Mammary epithelial cell (primary cell): ENCODE measurements at regions of chr16 and their contacts with region 1.

Region 1: GRCh38 chr16:1069154-1069553 is 3.4 kb upstream of the SSTR5 start:
- DNase-seq: no peak
- H3K4me3 ChIP-seq: no peak overlapping the region
- H3K27ac ChIP-seq: no peak overlapping the region
- H3K4me1 ChIP-seq: no peaks in the 10 kb centered on the region
- H3K27me3 ChIP-seq: peaks cover 16% of the 10 kb centered on the region
- CTCF ChIP-seq: no peak

Region 2: DNA sequence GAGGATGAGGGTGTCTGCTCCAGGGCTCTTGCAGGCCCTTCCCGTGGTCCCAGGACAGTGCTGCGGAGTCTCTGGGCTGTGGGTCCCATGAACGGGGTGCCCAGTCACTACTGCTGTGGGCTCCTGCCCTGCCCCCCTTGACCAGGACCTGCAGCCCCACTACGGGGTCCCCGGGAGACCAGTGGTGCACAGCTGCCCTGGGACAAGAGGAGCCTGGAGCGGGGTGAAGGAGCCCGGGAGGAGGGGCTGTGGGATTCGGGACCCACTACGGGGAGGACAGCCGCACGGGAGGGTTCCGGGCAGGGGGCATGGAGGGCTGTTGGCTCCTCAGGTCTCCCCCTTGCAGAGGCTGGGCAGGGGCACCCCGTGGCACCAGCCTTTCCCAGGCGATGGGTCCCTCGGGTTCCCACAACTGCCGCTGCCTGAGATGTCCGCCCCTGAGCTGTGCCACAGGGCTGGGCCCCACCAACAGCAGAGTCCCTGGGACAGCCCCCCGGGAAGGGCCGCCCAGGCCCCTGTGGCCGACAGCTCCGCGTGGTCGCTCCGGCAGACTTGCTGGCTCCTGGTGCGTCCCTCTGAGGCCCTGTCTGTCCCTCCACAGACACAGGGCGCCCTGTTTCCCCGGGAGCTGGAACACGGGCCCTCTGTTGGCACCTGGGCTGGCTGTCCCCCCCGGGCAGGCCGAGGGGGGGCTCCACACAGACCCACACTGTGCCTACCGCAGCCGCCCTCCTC is 216.5 kb before region 1 on chr16:
- CTCF ChIA-PET with region 1: no interaction called
- dilution Hi-C with region 1: loop called (anchors 5 kb)
- in situ Hi-C with region 1: no loop called
- intact Hi-C with region 1: no loop called
- DNase-seq: no peak
- H3K4me3 ChIP-seq: no peak overlapping the region
- H3K27ac ChIP-seq: no peak overlapping the region
- H3K4me1 ChIP-seq: no peaks in the 10 kb centered on the region
- H3K27me3 ChIP-seq: no peaks in the 10 kb centered on the region
- CTCF ChIP-seq: no peak

Region 3: DNA sequence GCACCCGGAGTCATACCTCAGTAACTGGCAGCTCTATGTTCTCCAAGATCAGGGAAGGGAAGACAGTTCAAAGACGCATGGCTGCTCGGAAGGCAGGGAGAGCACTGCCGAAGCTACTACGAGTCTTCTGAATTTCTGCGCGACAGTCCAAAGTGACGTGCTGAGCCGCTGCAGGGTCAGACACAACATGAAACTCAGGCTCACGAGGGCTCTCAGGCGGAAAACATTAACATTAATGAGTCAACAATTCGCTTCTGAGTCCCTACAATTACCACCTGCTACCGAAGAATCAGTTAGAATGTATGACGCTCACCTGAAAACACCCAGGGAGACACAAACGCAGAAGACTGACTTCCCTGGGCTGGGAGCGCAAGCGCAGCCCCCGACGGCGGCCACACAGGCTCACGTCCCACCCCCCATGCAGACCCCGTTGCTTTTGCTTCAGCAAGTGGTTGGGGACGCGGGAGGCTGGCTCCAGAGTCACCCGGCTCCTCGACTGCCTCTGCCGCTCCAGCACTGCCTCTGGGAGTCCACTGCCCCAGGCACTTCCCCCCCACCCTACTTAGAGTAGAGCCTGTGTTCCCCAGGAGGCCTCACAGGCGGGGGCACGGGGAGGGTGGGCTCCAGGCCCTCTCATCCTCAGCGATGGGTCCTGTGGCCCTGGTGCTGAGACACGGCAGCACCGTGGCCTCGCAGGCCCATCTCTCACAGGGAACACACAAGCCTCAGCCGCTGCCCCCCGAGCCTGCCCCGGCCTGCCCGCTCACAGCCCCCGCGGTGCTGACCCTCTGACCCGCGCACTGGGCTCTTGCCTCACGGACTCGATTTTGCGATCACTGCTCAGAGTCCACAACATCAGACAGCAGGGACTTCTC is 137.3 kb before region 1 on chr16:
- CTCF ChIA-PET with region 1: no interaction called
- dilution Hi-C with region 1: loop called (anchors 10 kb)
- in situ Hi-C with region 1: no loop called
- intact Hi-C with region 1: no loop called
- DNase-seq: no peak
- H3K4me3 ChIP-seq: no peak overlapping the region
- H3K27ac ChIP-seq: no peak overlapping the region
- H3K4me1 ChIP-seq: no peaks in the 10 kb centered on the region
- H3K27me3 ChIP-seq: no peaks in the 10 kb centered on the region
- CTCF ChIP-seq: no peak

Region 4: DNA sequence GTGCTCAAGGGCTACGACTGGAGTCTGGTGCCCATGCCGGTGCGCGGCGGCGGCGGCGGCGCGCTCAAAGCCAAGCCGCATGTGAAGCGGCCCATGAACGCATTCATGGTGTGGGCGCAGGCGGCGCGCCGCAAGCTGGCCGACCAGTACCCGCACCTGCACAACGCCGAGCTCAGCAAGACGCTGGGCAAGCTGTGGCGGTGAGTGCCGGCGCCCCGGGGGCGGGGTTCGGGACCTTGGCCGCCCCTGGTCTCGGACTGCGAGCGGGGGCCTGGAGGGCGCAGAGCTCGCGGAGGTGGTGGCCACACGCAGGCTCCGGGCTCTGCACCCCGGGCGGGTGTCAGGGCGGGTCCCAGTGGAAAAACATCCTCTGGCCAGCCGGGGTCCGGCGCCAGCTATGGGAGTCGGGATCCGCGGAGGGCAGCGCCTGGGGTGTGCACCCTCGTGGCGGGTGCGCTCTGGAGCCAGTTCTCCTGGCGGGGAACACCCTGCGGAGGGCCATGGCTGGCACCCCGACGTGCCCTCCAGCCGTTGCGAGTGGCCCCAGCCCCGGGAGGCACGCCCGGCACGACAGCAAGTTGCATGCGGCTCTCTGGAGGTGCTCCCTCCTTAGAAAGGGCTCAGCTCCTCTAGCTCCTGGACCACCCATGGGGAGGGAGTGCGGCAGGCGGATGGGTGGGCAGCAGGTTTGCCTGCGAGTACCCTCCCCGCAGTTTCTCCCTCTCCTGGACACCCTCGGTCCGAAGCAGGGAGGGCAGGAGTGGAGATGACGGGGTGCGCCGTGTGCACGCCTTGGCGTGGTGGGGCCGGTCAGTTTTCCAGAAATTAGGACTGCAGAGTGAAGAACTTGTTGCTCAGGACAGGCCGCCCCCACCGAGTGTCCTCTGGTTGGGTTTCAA is 86.8 kb before region 1 on chr16:
- CTCF ChIA-PET with region 1: no interaction called
- dilution Hi-C with region 1: loop called (anchors 10 kb)
- in situ Hi-C with region 1: no loop called
- intact Hi-C with region 1: no loop called
- DNase-seq: no peak
- H3K4me3 ChIP-seq: no peak overlapping the region
- H3K27ac ChIP-seq: no peak overlapping the region
- H3K4me1 ChIP-seq: no peaks in the 10 kb centered on the region
- H3K27me3 ChIP-seq: peaks cover 37% of the 10 kb centered on the region
- CTCF ChIP-seq: no peak

Region 5: GRCh38 chr16:1036726-1037393 is 32.3 kb before region 1 on chr16:
- CTCF ChIA-PET with region 1: no interaction called
- dilution Hi-C with region 1: no loop called
- in situ Hi-C with region 1: no loop called
- intact Hi-C with region 1: no loop called
- DNase-seq: peak; percentile 75
- H3K4me3 ChIP-seq: peak overlapping the region in 1 of 3 experiments; percentile 9
- H3K27ac ChIP-seq: no peak overlapping the region
- H3K4me1 ChIP-seq: peaks cover 14% of the 10 kb centered on the region
- H3K27me3 ChIP-seq: no peaks in the 10 kb centered on the region
- CTCF ChIP-seq: no peak

Region 6: DNA sequence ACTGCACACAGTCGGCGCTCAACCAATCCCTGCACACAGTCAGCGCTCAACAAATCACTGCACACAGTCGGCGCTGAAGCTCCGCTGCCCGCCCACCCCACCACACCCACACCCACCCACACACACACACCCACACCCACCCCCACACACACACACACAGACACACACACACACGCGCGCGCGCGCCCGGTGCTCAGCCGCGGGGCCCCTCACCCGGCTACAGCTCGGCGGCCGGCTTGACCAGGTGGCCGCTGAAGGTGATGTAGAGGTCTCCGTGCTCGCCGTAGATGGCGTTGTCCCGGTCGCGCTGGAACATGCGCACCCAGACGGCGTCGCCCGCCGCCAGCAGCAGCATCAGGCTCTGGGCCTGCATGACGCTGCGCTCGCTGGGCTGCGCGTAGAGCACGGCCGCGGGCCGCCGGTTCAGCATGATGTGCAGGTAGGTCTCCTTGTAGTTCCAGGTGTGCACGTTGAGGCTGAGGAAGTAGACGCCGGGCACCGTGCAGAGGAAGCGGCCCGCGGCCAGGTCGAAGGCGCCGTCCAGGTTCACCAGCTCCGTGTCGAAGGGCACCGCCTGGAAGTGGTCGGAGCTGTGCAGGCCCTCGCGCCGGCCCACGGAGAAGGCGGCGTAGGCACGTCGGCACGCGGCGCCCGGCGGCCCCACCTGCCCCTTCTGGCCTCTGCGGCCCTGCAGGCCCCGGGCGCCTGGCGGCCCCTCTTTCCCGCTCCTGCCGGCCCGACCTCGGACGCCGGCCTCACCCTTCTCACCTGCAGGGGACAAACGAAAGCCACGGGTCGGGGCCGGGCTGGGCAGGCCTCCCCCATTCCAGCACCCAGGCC is 24.4 kb after region 1 on chr16:
- CTCF ChIA-PET with region 1: no interaction called
- dilution Hi-C with region 1: no loop called
- in situ Hi-C with region 1: no loop called
- intact Hi-C with region 1: no loop called
- DNase-seq: no peak
- H3K4me3 ChIP-seq: no peak overlapping the region
- H3K27ac ChIP-seq: no peak overlapping the region
- H3K4me1 ChIP-seq: no peaks in the 10 kb centered on the region
- H3K27me3 ChIP-seq: peaks cover 7% of the 10 kb centered on the region
- CTCF ChIP-seq: no peak

Region 7: DNA sequence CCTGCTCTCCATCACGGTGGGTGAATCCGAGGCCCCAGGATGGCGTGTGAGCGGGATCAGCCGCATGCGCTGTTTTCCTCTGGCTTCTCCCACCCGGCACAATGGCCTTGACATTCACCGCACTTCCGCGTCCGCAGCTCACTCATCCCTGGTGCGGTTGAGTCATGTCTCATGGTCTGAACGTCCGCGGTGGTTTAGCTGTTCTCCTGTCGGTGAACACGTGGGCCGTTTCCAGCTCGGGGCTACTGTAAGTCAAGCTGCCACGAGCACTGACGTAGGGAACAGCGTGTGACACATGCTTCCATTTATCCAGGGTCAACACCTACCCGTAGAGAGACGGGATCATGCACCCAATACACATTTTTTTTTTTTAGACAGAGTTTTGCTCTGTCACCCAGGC is 68.5 kb after region 1 on chr16:
- CTCF ChIA-PET with region 1: no interaction called
- dilution Hi-C with region 1: loop called (anchors 5 kb)
- in situ Hi-C with region 1: no loop called
- intact Hi-C with region 1: no loop called
- DNase-seq: no peak
- H3K4me3 ChIP-seq: no peak overlapping the region
- H3K27ac ChIP-seq: no peak overlapping the region
- H3K4me1 ChIP-seq: no peaks in the 10 kb centered on the region
- H3K27me3 ChIP-seq: no peaks in the 10 kb centered on the region
- CTCF ChIP-seq: no peak

Region 8: GRCh38 chr16:1216296-1216619 is 147.1 kb after region 1 on chr16:
- CTCF ChIA-PET with region 1: no interaction called
- dilution Hi-C with region 1: loop called (anchors 10 kb)
- in situ Hi-C with region 1: no loop called
- intact Hi-C with region 1: no loop called
- DNase-seq: no peak
- H3K4me3 ChIP-seq: no peak overlapping the region
- H3K27ac ChIP-seq: no peak overlapping the region
- H3K4me1 ChIP-seq: no peaks in the 10 kb centered on the region
- H3K27me3 ChIP-seq: peaks cover 2% of the 10 kb centered on the region
- CTCF ChIP-seq: no peak

Region 9: DNA sequence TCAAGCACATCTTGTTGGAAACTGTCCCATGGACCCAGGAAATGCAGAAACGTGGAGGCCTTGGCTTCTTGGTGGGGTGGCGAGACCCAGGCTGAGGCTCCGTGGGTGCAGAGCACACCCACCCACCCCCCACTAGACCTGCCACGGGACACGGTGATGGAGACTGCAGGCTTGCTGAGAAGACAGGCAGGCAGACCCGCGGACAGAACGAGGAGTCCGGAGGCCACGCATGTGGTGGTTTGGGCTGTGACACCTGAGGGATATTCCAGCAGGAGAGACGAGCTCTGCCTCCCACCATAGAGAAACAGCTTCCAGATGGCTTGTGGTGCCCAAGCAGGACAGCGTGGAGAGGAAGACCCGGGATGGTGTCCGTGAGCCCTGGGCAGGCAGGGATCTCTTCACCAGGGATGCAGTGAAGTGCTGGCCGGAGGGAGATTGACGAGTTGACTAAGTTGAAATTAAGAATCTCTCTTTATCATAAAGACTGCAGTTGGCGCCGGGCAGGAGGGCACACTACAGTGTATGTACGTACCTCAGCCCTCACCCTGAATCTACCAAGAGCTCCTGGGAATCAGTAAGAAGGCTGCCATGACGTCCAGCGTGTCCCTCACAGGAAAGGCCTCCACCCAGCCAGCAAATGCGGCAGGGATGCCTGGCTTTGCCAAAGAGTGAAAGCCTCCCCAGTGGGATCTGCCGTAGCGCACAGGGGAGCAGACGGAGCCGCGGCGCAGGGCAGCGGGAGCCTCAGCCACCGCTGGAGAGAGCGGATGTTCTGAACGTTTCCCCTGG is 248.5 kb after region 1 on chr16:
- CTCF ChIA-PET with region 1: no interaction called
- dilution Hi-C with region 1: loop called (anchors 5 kb)
- in situ Hi-C with region 1: no loop called
- intact Hi-C with region 1: no loop called
- DNase-seq: no peak
- H3K4me3 ChIP-seq: no peak overlapping the region
- H3K27ac ChIP-seq: no peak overlapping the region
- H3K4me1 ChIP-seq: peaks cover 4% of the 10 kb centered on the region
- H3K27me3 ChIP-seq: no peaks in the 10 kb centered on the region
- CTCF ChIP-seq: no peak

Region 10: DNA sequence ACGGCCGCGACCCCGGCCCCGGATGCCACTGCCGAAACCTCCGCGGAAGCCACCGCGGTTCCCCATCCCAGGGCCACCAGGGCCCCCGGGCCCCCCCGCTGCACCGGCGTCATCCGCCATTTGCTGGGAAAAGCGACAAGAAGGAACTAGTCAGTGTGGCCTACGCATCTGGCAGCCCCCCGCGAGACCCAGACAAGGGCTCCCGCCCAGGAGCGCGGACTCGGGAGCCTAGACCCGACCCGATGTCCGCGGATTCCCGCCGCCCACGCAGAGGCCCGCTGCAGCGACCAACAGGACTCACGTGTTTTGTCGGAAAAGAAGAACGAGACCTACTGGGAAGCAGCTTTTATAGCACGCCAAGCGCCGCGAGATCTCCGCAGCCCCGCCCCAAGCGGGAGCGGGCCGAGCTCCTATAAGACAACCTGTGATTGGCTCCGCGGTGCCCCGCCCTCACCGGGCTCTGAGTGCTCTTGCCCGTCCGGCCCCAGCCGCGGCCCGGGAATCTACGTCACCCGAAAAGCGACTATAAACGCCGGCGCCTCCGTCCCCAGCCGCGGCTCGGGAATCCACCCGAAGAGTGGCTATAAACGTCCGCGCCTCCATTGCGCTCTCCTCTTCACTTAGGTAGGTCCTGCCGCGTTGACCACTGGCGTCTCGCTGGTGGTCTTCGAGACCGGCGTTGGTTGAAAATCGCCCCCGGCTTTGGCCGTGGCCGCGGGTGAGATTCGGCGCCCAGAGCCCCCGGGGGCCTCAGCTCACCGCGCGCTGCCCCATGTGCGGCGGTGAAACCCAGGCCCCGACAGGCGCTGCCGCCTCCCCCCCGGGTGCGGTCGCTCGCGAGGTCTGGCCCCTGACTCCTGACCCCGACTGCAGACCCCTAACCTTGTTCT is 895.6 kb after region 1 on chr16 and contains the start of gene RPS2:
- CTCF ChIA-PET with region 1: no interaction called
- dilution Hi-C with region 1: no loop called
- in situ Hi-C with region 1: no loop called
- intact Hi-C with region 1: no loop called
- DNase-seq: peak; percentile 96
- H3K4me3 ChIP-seq: peak within 1 kb of the TSS; percentile 59 to 98 (median 94)
- H3K27ac ChIP-seq: peak within 1 kb of the TSS; percentile 87
- H3K4me1 ChIP-seq: peaks cover 16% of the 10 kb centered on the region
- H3K27me3 ChIP-seq: no peaks in the 10 kb centered on the region
- CTCF ChIP-seq: no peak
- total RNA-seq, gene RPS2: 1,442 to 3,060 TPM